ENCODE measurements at regions of chr2 and their contacts with region 1.

Region 1: GRCh38 chr2:173210270-173211196 is 134.9 kb downstream of the MAP3K20 start:
- DNase-seq: peak; percentile 72
- H3K4me3 Mint-ChIP-seq: no peak overlapping the region
- H3K27ac Mint-ChIP-seq: no peak overlapping the region
- H3K4me1 Mint-ChIP-seq: no peaks in the 10 kb centered on the region
- H3K27me3 Mint-ChIP-seq: peaks cover 8% of the 10 kb centered on the region

Region 2: GRCh38 chr2:172806493-172806892 is 404.0 kb before region 1 on chr2:
- CTCF ChIA-PET with region 1: no interaction called
- intact Hi-C with region 1: loop called (anchors 2 kb)
- DNase-seq: peak; percentile 9
- H3K4me3 Mint-ChIP-seq: no peak overlapping the region
- H3K27ac Mint-ChIP-seq: no peak overlapping the region
- H3K4me1 Mint-ChIP-seq: no peaks in the 10 kb centered on the region
- H3K27me3 Mint-ChIP-seq: peaks cover 2% of the 10 kb centered on the region

Region 3: GRCh38 chr2:172972005-172972619 is 238.4 kb before region 1 on chr2:
- CTCF ChIA-PET with region 1: interaction called, 8 read pairs
- intact Hi-C with region 1: loop called (anchors 1 kb)
- DNase-seq: peak; percentile 70
- H3K4me3 Mint-ChIP-seq: no peak overlapping the region
- H3K27ac Mint-ChIP-seq: no peak overlapping the region
- H3K4me1 Mint-ChIP-seq: peaks cover 23% of the 10 kb centered on the region
- H3K27me3 Mint-ChIP-seq: peaks cover 14% of the 10 kb centered on the region

Region 4: DNA sequence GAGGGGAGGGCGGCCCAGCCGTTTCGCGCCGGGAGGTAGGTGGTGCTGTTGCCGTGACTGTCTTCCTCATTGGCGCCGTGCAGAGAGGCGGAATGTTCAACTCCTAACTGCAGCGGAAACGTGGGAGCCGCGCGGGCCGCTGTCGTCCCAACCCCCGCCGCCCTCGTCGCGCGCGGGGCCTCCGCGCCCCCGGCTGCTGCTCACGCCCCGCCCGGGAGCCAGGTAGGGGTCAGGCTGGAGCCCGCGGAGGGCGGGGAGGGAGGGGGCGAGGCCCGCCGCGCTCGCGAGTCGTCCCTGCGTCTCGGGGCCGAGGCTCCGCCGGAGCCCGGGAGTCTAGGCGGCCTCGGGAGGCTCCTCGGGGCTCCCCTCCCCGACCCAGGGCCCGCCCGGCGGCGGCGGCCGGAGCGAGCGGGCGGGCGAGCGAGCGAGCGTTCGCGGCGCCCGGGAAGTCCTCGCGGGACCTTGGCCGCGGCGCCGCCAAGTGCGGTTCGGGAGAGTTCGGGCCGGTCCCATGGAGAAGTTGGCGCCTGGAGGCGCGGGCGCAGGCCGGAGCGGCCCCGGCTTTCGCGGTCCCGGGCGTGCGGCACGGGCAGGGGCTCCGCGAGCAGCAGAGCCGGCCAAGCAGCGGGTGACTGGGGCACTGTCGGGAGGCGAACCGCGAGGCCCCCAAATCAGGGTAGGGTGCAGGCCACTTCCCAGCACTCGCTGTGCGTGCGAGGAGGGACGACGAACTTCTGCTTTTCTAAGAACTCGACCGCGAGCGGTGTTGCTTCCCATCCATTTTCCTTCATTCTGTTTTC is 134.6 kb before region 1 on chr2 and contains the start of gene MAP3K20:
- CTCF ChIA-PET with region 1: interaction called, 3 read pairs
- intact Hi-C with region 1: loop called (anchors 1 kb)
- DNase-seq: peak; percentile 65
- H3K4me3 Mint-ChIP-seq: peak within 1 kb of the TSS; percentile 68
- H3K27ac Mint-ChIP-seq: no peak within 1 kb of the TSS
- H3K4me1 Mint-ChIP-seq: peaks cover 5% of the 10 kb centered on the region
- H3K27me3 Mint-ChIP-seq: peaks cover 41% of the 10 kb centered on the region
- total RNA-seq, gene MAP3K20: 3.0 to 3.7 TPM

Region 5: GRCh38 chr2:173199294-173199693 is 11.2 kb before region 1 on chr2:
- CTCF ChIA-PET with region 1: interaction called, 10 read pairs
- intact Hi-C with region 1: no loop called
- DNase-seq: no peak
- H3K4me3 Mint-ChIP-seq: no peak overlapping the region
- H3K27ac Mint-ChIP-seq: no peak overlapping the region
- H3K4me1 Mint-ChIP-seq: no peaks in the 10 kb centered on the region
- H3K27me3 Mint-ChIP-seq: peaks cover 2% of the 10 kb centered on the region

Measured in activated naive CD4-positive, alpha-beta T cell treated with anti-CD3 and anti-CD28 coated beads for 36 hours (primary cell).